ENCODE measurements at regions of chr18 and their contacts with region 1.

Region 1: GRCh38 chr18:58781627-58782194 is 83.0 kb upstream of the ZNF532 start:
- DNase-seq: peak; percentile 93
- H3K4me3 ChIP-seq: no peak overlapping the region
- H3K27ac ChIP-seq: peak overlapping the region; percentile 28
- H3K4me1 ChIP-seq: peaks cover 34% of the 10 kb centered on the region
- H3K27me3 ChIP-seq: no peaks in the 10 kb centered on the region
- CTCF ChIP-seq: peak; percentile 97

Region 2: GRCh38 chr18:58639751-58640427 is 141.8 kb before region 1 on chr18:
- CTCF ChIA-PET with region 1: no interaction called
- POLR2A ChIA-PET with region 1: no interaction called
- intact Hi-C with region 1: no loop called
- DNase-seq: peak; percentile 89
- H3K4me3 ChIP-seq: no peak overlapping the region
- H3K27ac ChIP-seq: peak overlapping the region; percentile 80
- H3K4me1 ChIP-seq: peaks cover 36% of the 10 kb centered on the region
- H3K27me3 ChIP-seq: no peaks in the 10 kb centered on the region
- CTCF ChIP-seq: no peak

Region 3: GRCh38 chr18:58800582-58800981 is 18.9 kb after region 1 on chr18:
- CTCF ChIA-PET with region 1: no interaction called
- POLR2A ChIA-PET with region 1: interaction called, 25 read pairs
- intact Hi-C with region 1: no loop called
- DNase-seq: no peak
- H3K4me3 ChIP-seq: no peak overlapping the region
- H3K27ac ChIP-seq: no peak overlapping the region
- H3K4me1 ChIP-seq: peaks cover 6% of the 10 kb centered on the region
- H3K27me3 ChIP-seq: no peaks in the 10 kb centered on the region
- CTCF ChIP-seq: no peak

Region 4: DNA sequence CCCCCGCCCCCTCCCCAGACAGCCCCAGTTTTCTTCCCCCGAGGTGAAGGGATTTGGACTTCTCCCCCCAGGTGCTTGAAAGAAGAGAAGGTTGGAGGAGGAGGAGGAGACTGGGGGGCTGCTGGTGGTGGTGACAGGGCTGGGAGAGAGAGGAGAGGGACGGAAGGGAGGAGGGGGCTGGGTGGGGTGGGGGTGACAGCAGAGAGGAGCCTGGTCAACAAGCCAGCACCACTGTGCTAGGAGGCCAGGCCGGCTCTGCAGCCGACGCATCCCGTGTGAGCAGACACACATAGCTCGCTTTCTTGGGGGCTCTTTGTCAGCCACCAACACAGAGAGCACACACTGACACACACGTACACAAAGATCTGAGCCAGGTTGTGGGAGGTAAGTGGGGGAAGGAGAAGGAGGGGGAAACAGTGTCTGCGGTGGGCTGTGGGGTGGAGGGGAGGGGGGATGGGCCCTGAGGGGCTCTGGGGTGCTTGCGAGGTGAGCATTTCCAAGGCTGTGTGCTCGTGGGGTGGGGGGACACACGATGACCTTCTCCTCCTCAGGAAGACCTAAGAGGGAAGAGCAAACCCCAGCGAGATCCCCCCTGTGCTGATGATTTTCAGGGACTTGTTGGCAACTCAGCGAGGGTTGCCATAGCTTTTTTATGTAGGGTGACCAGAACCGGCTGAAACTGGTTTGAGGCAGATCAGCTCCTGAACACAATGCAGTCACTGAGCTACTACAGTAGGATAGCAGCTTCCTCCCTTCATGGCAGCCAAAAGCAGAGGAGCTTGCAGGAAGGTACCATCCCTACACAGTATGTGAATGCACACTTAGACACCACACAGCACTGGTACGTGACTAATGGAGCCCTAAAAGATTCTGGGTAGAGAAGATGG is 82.7 kb after region 1 on chr18 and contains the start of gene ZNF532:
- CTCF ChIA-PET with region 1: no interaction called
- POLR2A ChIA-PET with region 1: no interaction called
- intact Hi-C with region 1: loop called (anchors 5 kb)
- DNase-seq: peak; percentile 80
- H3K4me3 ChIP-seq: peak within 1 kb of the TSS; percentile 50
- H3K27ac ChIP-seq: peak within 1 kb of the TSS; percentile 97
- H3K4me1 ChIP-seq: peaks cover 78% of the 10 kb centered on the region
- H3K27me3 ChIP-seq: no peaks in the 10 kb centered on the region
- CTCF ChIP-seq: no peak
- total RNA-seq, gene ZNF532: 118 and 119 TPM in 2 replicates

Region 5: DNA sequence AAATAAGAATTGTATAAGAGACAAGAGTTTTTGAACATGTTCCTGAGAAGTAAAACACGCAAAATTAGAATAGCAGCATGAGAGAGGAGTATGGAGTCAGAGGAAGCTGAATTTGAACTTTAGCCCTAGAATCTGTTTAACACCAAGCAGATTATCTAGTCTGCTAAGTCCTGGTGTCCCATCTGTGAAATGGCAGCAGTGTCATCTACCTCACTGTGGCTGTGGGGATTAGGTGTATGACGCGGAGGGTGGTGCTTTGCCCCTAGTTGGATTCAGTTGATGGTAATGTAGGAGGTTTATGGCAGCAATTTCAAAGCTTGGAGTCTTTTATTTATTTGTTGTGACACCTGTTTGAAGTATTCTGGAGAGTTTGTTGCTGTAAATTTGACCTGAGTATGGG is 162.2 kb after region 1 on chr18:
- CTCF ChIA-PET with region 1: no interaction called
- POLR2A ChIA-PET with region 1: interaction called, 10 read pairs
- intact Hi-C with region 1: loop called (anchors 5 kb)
- DNase-seq: no peak
- H3K4me3 ChIP-seq: no peak overlapping the region
- H3K27ac ChIP-seq: peak overlapping the region; percentile 97
- H3K4me1 ChIP-seq: peaks cover 75% of the 10 kb centered on the region
- H3K27me3 ChIP-seq: no peaks in the 10 kb centered on the region
- CTCF ChIP-seq: no peak

Region 6: GRCh38 chr18:59056706-59057492 is 275.2 kb after region 1 on chr18:
- CTCF ChIA-PET with region 1: interaction called, 6 read pairs
- POLR2A ChIA-PET with region 1: no interaction called
- intact Hi-C with region 1: loop called (anchors 1 kb)
- DNase-seq: peak; percentile 88
- H3K4me3 ChIP-seq: no peak overlapping the region
- H3K27ac ChIP-seq: peak overlapping the region; percentile 58
- H3K4me1 ChIP-seq: peaks cover 53% of the 10 kb centered on the region
- H3K27me3 ChIP-seq: no peaks in the 10 kb centered on the region
- CTCF ChIP-seq: peak; percentile 95

Region 7: GRCh38 chr18:59070181-59070912 is 288.6 kb after region 1 on chr18:
- CTCF ChIA-PET with region 1: interaction called, 16 read pairs
- POLR2A ChIA-PET with region 1: no interaction called
- intact Hi-C with region 1: loop called (anchors 1 kb)
- DNase-seq: peak; percentile 94
- H3K4me3 ChIP-seq: no peak overlapping the region
- H3K27ac ChIP-seq: no peak overlapping the region
- H3K4me1 ChIP-seq: peaks cover 4% of the 10 kb centered on the region
- H3K27me3 ChIP-seq: no peaks in the 10 kb centered on the region
- CTCF ChIP-seq: peak; percentile 96

Region 8: DNA sequence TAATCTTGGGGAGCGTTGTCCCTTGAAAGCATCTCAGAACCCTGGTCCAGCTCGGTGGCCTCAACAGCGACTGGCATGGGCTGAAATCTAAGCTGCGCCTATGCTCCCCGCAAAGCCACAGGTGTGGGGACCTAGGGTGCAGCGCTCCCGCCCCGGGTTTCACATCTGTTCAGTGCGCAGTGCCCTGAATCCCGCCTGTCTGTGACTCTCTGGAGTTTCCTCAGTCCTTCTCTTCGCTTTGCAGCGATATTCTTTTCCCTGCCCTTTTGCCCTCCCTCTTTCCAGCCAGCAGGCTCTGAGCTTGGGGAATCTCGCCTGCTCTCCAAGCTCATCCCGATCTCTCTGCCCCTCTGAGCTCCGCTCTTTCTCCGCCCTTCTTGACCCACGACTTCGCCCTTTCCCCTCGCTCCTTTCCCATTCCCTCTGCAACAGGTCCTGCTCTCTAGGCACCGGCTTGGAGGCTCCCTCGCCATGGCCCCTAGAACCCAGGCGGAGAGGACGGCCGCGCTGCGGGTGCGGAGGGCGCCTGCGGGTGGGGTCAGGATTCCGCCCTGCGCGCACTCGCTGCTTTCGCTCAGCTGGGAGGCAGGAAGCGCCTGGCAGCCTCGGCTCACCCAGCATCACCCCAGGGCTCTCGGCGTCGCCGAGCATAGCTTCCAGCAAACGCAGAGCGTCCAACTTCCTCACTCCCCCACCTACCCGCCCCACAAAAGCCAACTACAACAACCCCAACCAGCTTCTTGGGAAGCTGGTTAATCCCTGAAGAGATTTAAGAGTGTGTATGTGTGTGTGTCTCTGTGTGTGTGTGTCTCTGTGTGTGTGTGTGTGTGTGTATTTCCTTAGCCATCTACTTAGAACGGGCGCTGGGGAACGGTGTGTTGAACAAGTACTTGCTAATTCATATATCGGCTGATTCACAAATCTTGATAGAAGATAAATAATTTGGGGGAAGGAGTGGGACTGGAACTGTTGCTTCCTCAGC is 439.4 kb after region 1 on chr18:
- CTCF ChIA-PET with region 1: no interaction called
- POLR2A ChIA-PET with region 1: no interaction called
- intact Hi-C with region 1: loop called (anchors 10 kb)
- DNase-seq: no peak
- H3K4me3 ChIP-seq: peak overlapping the region; percentile 86
- H3K27ac ChIP-seq: peak overlapping the region; percentile 90
- H3K4me1 ChIP-seq: peaks cover 40% of the 10 kb centered on the region
- H3K27me3 ChIP-seq: no peaks in the 10 kb centered on the region
- CTCF ChIP-seq: no peak